Panc1 (cell line): ENCODE measurements at regions of chr16 and their contacts with region 1.

Region 1: GRCh38 chr16:66668777-66669444 is 27.6 kb downstream of the CMTM4 start:
- DNase-seq: no peak
- ATAC-seq: no peak
- H3K4me3 ChIP-seq: no peak overlapping the region
- H3K27ac ChIP-seq: no peak overlapping the region
- H3K4me1 ChIP-seq: no peaks in the 10 kb centered on the region
- H3K27me3 ChIP-seq: no peaks in the 10 kb centered on the region
- CTCF ChIP-seq: no peak

Region 2: GRCh38 chr16:66406534-66407221 is 262.2 kb before region 1 on chr16:
- CTCF ChIA-PET with region 1: no interaction called
- POLR2A ChIA-PET with region 1: no interaction called
- in situ Hi-C with region 1: no loop called
- intact Hi-C with region 1: no loop called
- DNase-seq: peak; percentile 18
- ATAC-seq: peak; percentile 94
- H3K4me3 ChIP-seq: peak overlapping the region; percentile 58 to 81
- H3K27ac ChIP-seq: no peak overlapping the region
- H3K4me1 ChIP-seq: no peaks in the 10 kb centered on the region
- H3K27me3 ChIP-seq: no peaks in the 10 kb centered on the region
- CTCF ChIP-seq: peak; percentile 82

Region 3: GRCh38 chr16:66830422-66831404 is 161.8 kb after region 1 on chr16 and contains the start of gene NAE1:
- CTCF ChIA-PET with region 1: interaction called, 18 read pairs
- POLR2A ChIA-PET with region 1: no interaction called
- in situ Hi-C with region 1: no loop called
- intact Hi-C with region 1: no loop called
- DNase-seq: peak; percentile 50
- ATAC-seq: peak; percentile 96
- H3K4me3 ChIP-seq: peak within 1 kb of the TSS; percentile 73 to 74
- H3K27ac ChIP-seq: peak within 1 kb of the TSS; percentile 80
- H3K4me1 ChIP-seq: peaks cover 6% of the 10 kb centered on the region; the same call in 1 of the 2 replicates
- H3K27me3 ChIP-seq: no peaks in the 10 kb centered on the region
- CTCF ChIP-seq: peak; percentile 97
- total RNA-seq, gene NAE1: 70.7 TPM

Region 4: GRCh38 chr16:66840883-66841282 is 172.0 kb after region 1 on chr16:
- CTCF ChIA-PET with region 1: no interaction called
- POLR2A ChIA-PET with region 1: no interaction called
- in situ Hi-C with region 1: no loop called
- intact Hi-C with region 1: no loop called
- DNase-seq: no peak
- ATAC-seq: no peak
- H3K4me3 ChIP-seq: no peak overlapping the region
- H3K27ac ChIP-seq: no peak overlapping the region
- H3K4me1 ChIP-seq: no peaks in the 10 kb centered on the region
- H3K27me3 ChIP-seq: no peaks in the 10 kb centered on the region; the same call in 1 of the 2 replicates
- CTCF ChIP-seq: no peak

Region 5: GRCh38 chr16:66934153-66934838 is 265.4 kb after region 1 on chr16 and contains the start of gene CIAO2B:
- CTCF ChIA-PET with region 1: no interaction called
- POLR2A ChIA-PET with region 1: no interaction called
- in situ Hi-C with region 1: no loop called
- intact Hi-C with region 1: no loop called
- DNase-seq: no peak
- ATAC-seq: peak; percentile 90
- H3K4me3 ChIP-seq: peak within 1 kb of the TSS; percentile 83 to 95
- H3K27ac ChIP-seq: peak within 1 kb of the TSS; percentile 88
- H3K4me1 ChIP-seq: peaks cover 3% of the 10 kb centered on the region
- H3K27me3 ChIP-seq: no peaks in the 10 kb centered on the region
- CTCF ChIP-seq: no peak
- total RNA-seq, gene CIAO2B: 96.6 TPM